OCI-LY7 (cell line): ENCODE measurements at regions of chr14 and their contacts with region 1.

Region 1: DNA sequence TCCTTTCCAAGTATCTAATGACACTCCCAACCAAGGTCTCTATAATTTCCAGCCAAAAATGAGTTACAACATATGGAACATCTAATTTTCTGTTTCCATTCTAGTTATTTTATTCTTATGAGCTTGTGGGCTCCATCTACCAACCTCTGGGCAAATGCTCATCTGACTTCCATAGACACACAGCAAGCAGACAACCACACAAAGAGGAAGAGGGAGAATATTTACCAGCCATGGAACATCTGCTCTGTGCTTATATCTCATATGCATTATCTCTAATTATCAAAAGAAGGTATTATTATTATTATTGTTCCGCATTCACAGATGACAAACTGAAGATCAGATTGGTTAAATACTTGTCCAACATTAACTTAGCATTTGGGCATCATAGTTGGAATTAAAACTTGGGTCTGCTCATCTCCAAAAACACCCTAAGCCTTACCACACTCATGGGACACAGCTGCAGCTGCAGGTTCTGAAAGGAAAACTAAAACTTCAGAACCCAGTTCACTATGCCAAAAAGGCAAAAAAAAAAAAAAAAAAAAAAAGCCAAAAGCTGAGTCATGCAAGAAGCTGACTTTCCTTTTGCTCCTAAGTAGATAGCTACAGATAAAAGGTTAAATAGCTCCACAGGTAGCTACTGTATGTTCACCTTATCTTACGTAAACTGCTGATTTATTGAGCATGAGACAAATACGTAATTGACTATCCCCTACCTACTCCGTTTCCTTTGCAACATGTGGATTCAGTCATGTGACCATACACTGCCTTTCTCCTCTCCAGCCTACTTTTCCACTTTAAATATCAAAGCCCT is 23.6 kb upstream of the TCL1B start:
- DNase-seq: peak; percentile 73
- H3K4me3 ChIP-seq: peak overlapping the region; percentile 48
- H3K27ac ChIP-seq: peak overlapping the region; percentile 98
- H3K4me1 ChIP-seq: peaks cover 96% of the 10 kb centered on the region
- CTCF ChIP-seq: no peak

Region 2: GRCh38 chr14:93959239-93960107 is 1703.1 kb before region 1 on chr14:
- CTCF ChIA-PET with region 1: no interaction called
- POLR2A ChIA-PET with region 1: no interaction called
- intact Hi-C with region 1: loop called (anchors 10 kb)
- DNase-seq: peak; percentile 87
- H3K4me3 ChIP-seq: peak overlapping the region; percentile 51
- H3K27ac ChIP-seq: peak overlapping the region; percentile 92
- H3K4me1 ChIP-seq: peaks cover 99% of the 10 kb centered on the region
- CTCF ChIP-seq: no peak

Region 3: DNA sequence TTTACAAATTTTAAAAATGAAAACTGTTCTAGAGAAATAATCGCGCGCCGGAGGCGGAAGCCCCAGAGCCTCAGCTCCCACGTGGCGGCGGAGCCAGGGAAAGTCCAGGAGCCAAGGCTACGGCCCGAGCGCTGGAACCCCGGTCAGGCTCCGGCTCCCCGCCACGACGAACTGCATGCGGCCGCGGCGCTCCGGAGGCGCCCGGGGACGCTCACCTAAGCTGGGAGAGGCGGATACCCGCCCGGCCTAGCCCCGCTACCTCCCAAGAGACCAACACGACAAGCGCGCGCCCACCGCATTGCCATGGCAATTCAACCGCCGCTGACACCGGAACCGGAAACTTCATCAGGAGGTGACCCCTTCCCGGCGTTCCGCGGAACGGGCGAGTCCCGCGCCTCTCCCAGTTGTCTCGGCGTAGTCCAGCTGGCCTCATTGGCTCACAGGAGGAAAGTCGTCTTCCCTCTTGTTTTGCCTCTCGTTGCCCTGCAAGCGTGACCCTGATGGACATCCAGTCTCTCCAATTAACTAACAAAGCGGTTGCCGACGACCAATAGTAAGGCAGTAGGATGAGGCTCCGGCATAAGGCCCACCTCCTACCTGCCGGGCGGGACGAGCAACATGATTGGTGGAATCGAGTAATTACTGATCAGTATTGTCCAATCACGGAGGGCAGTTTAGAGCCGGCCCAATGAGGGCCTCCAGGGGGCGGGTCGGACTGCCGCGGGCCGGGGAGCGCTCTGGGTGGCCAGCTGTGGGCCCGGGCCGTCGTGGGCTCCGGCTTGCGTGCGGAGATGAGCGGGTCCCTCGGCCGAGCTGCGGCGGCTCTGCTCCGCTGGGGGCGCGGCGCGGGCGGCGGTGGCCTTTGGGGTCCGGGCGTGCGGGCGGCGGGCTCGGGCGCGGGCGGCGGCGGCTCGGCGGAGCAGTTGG is 128.0 kb before region 1 on chr14 and contains the start of gene GLRX5:
- CTCF ChIA-PET with region 1: no interaction called
- POLR2A ChIA-PET with region 1: interaction called, 8 read pairs
- intact Hi-C with region 1: loop called (anchors 1 kb)
- DNase-seq: peak; percentile 100
- H3K4me3 ChIP-seq: peak within 1 kb of the TSS; percentile 93
- H3K27ac ChIP-seq: peak within 1 kb of the TSS; percentile 80
- H3K4me1 ChIP-seq: peaks cover 54% of the 10 kb centered on the region
- CTCF ChIP-seq: no peak
- total RNA-seq, gene GLRX5: 59.6 and 68.2 TPM in 2 replicates

Region 4: DNA sequence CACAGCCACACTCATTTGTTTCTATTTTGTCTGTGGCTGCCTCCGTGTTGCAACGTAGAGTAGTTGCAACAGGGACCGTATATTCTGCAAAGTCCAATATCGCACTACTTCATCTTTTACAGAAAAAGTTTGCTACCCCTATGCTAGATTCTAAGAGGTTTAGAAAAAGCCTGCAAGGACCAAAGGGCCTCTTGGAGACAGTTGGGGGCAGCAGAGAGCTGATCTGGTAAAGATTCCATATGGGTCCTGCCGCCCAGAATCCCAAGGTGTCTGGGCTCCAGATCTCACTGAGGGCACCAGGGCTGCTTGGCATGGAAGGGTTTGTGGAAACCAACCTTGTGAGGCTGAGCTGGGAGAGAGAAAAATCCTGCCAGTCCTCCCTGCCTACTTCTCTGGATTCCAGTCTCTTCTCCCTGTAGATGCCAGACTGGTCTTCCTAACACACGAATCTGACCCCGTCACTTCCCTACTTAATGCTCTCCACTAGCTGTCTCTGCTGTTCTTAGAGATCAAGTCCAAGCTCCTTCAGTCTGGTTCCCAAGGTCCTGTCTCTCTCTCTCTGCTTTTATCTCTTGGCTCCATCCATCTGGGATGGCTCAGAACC is 53.1 kb before region 1 on chr14:
- CTCF ChIA-PET with region 1: interaction called, 8 read pairs
- POLR2A ChIA-PET with region 1: interaction called, 15 read pairs
- intact Hi-C with region 1: loop called (anchors 1 kb)
- DNase-seq: peak; percentile 81
- H3K4me3 ChIP-seq: no peak overlapping the region
- H3K27ac ChIP-seq: no peak overlapping the region
- H3K4me1 ChIP-seq: peaks cover 26% of the 10 kb centered on the region
- CTCF ChIP-seq: peak; percentile 97

Region 5: DNA sequence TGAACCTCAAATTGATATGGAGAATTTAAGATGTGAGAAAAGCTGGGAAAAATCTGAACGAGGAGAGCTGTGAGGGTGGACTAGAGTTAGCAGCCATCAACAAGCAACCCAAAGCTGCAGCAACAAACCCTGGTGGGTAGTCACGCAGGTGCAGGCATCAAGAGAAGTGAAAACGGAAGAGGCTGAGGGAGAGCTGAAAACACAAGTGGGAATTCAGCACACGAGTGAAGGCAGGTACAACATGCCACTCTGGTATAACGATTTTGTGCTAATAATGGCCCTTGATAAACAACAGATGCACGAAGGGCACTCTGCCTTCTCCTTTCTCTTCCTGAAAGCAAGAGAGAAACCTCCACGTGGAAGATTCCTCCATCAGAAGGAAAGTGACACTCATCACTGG is 35.2 kb after region 1 on chr14:
- CTCF ChIA-PET with region 1: interaction called, 9 read pairs
- POLR2A ChIA-PET with region 1: interaction called, 235 read pairs
- intact Hi-C with region 1: loop called (anchors 1 kb)
- DNase-seq: peak; percentile 94
- H3K4me3 ChIP-seq: peak overlapping the region; percentile 49
- H3K27ac ChIP-seq: peak overlapping the region; percentile 100
- H3K4me1 ChIP-seq: peaks cover 97% of the 10 kb centered on the region
- CTCF ChIP-seq: no peak

Region 6: GRCh38 chr14:95713596-95714371 is 51.2 kb after region 1 on chr14 and contains the start of gene TCL1A:
- CTCF ChIA-PET with region 1: interaction called, 10 read pairs
- POLR2A ChIA-PET with region 1: interaction called, 50 read pairs
- intact Hi-C with region 1: loop called (anchors 1 kb)
- DNase-seq: peak; percentile 93
- H3K4me3 ChIP-seq: peak within 1 kb of the TSS; percentile 99
- H3K27ac ChIP-seq: peak within 1 kb of the TSS; percentile 86
- H3K4me1 ChIP-seq: peaks cover 57% of the 10 kb centered on the region
- CTCF ChIP-seq: peak; percentile 70
- total RNA-seq, gene TCL1A: 1,441 and 1,586 TPM in 2 replicates

Region 7: DNA sequence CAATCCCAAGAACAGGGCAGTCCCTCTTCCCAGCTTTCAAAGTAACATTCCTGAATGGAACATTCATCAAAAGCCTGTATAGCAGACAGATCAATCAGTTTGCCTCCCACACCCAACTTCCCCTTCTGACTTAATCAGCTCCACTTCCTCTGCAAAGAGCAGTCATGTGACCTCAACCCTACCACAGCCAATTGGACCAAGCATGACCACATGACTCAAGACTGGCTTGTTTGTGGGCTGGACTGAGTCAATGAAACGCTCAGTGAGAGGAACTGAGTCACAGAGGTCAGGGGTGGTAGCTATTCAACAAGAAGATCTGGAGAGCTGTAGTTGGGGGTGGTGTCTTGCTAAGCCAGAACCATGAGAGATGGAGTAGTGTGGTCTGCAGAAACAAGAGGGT is 172.8 kb after region 1 on chr14:
- CTCF ChIA-PET with region 1: no interaction called
- POLR2A ChIA-PET with region 1: no interaction called
- intact Hi-C with region 1: no loop called
- DNase-seq: peak; percentile 13
- H3K4me3 ChIP-seq: peak overlapping the region; percentile 7
- H3K27ac ChIP-seq: no peak overlapping the region
- H3K4me1 ChIP-seq: peaks cover 6% of the 10 kb centered on the region
- CTCF ChIP-seq: no peak